HEK293T (cell line): ENCODE measurements at regions of chr1 and their contacts with region 1.

Region 1: GRCh38 chr1:152047730-152048402 is 11.1 kb upstream of the S100A11 start:
- DNase-seq: peak; percentile 85

Region 2: GRCh38 chr1:152034646-152035405 is 13.0 kb before region 1 on chr1:
- CTCF ChIA-PET with region 1: interaction called, 21 read pairs
- POLR2A ChIA-PET with region 1: interaction called, 19 read pairs
- DNase-seq: peak; percentile 79

Region 3: GRCh38 chr1:152110860-152111514 is 63.1 kb after region 1 on chr1:
- CTCF ChIA-PET with region 1: interaction called, 12 read pairs
- POLR2A ChIA-PET with region 1: interaction called, 5 read pairs
- DNase-seq: peak; percentile 34

Region 4: DNA sequence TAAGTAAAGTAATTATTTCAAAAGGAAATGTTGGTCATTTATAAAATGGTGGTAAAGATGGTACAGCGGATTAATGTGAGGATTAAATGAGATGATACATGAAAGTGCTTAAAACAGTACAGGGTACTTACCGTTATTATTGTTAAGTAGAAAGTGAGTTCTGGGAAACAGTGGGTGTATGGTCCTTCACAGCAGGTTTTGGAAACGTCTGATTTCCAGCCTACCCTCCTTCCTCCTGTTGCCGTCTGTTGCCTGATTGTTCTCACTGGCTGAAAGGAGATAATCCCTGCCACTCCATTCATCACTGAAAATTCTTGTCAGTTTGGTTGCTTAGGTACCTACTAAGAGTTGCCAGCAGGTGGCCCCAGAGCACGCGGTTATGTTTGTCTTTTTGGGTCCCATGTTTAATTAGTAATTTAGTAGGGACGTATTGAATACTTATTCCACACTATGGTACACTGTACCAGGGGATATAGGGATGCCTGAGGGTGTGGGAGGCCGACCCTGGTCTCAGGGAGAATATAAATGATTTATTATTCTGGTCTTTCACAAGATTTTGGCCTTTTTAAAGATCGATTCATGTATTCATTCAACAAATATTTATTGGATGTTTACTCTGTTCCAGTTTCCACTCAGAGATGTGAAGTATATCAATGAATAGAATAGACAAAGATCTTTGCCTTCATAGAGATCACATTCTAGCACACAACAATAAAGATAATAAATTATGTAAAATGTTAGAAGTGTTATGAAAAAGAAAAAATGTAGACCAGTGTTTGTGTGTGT is 142.0 kb after region 1 on chr1:
- CTCF ChIA-PET with region 1: interaction called, 12 read pairs
- POLR2A ChIA-PET with region 1: interaction called, 5 read pairs
- DNase-seq: peak; percentile 60